Heart left ventricle (tissue), 16 donors: ENCODE measurements at regions of chr11 and their contacts with region 1.

Region 1: GRCh38 chr11:94417386-94417987 is 16.3 kb upstream of the GPR83 start:
- DNase-seq: no peak
- ATAC-seq: no peak
- H3K4me3 ChIP-seq: no peak overlapping the region
- H3K27ac ChIP-seq: no peak overlapping the region
- H3K4me1 ChIP-seq: peaks cover 0 to 3% (median 0%) of the 10 kb centered on the region in 12 donors
- H3K27me3 ChIP-seq: no peaks in the 10 kb centered on the region
- CTCF ChIP-seq: peak; percentile 31 to 70 (median 56)
- POLR2A ChIP-seq: no peak

Region 2: GRCh38 chr11:93921695-93922468 is 495.6 kb before region 1 on chr11:
- intact Hi-C with region 1: loop called in 6 of 10 experiments (anchors 5 to 10 kb)
- DNase-seq: peak in 1 of 5 donors; percentile 14
- ATAC-seq: peak in 2 of 4 donors; percentile 47 to 52
- H3K4me3 ChIP-seq: no peak overlapping the region
- H3K27ac ChIP-seq: no peak overlapping the region
- H3K4me1 ChIP-seq: no peaks in the 10 kb centered on the region
- H3K27me3 ChIP-seq: peaks cover 0 to 13% (median 0%) of the 10 kb centered on the region in 9 donors
- CTCF ChIP-seq: peak; percentile 32 to 65 (median 48)
- POLR2A ChIP-seq: no peak

Region 3: GRCh38 chr11:94171693-94172440 is 245.6 kb before region 1 on chr11:
- intact Hi-C with region 1: loop called in 1 of 10 experiments (anchors 10 kb)
- DNase-seq: no peak
- ATAC-seq: peak in 3 of 4 donors; percentile 33 to 50 (median 39)
- H3K4me3 ChIP-seq: no peak overlapping the region
- H3K27ac ChIP-seq: no peak overlapping the region
- H3K4me1 ChIP-seq: peaks cover 0 to 20% (median 3%) of the 10 kb centered on the region in 12 donors
- H3K27me3 ChIP-seq: no peaks in the 10 kb centered on the region
- CTCF ChIP-seq: peak; percentile 26 to 60 (median 44)
- POLR2A ChIP-seq: no peak

Region 4: DNA sequence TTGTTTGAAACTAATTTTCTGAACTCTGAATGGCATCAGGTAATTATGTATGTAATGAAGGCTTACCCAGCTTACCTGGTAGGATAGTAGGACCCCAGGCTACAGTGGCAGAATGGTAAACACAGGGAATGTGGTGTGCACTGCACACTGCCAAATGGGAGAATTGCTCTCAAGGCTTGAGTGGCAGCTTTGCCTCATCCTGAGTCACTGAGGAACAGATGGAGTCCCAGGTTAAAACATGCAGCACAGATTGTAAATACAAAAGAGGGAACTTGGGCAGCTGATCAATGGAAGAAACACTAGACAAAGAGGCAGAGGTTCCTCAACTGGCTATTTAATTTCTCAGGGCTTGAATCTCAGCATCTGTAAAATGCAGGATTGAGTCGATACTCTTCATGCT is 40.6 kb before region 1 on chr11:
- intact Hi-C with region 1: no loop called
- DNase-seq: no peak
- ATAC-seq: no peak
- H3K4me3 ChIP-seq: no peak overlapping the region
- H3K27ac ChIP-seq: no peak overlapping the region
- H3K4me1 ChIP-seq: no peaks in the 10 kb centered on the region
- H3K27me3 ChIP-seq: no peaks in the 10 kb centered on the region
- CTCF ChIP-seq: no peak
- POLR2A ChIP-seq: no peak

Region 5: DNA sequence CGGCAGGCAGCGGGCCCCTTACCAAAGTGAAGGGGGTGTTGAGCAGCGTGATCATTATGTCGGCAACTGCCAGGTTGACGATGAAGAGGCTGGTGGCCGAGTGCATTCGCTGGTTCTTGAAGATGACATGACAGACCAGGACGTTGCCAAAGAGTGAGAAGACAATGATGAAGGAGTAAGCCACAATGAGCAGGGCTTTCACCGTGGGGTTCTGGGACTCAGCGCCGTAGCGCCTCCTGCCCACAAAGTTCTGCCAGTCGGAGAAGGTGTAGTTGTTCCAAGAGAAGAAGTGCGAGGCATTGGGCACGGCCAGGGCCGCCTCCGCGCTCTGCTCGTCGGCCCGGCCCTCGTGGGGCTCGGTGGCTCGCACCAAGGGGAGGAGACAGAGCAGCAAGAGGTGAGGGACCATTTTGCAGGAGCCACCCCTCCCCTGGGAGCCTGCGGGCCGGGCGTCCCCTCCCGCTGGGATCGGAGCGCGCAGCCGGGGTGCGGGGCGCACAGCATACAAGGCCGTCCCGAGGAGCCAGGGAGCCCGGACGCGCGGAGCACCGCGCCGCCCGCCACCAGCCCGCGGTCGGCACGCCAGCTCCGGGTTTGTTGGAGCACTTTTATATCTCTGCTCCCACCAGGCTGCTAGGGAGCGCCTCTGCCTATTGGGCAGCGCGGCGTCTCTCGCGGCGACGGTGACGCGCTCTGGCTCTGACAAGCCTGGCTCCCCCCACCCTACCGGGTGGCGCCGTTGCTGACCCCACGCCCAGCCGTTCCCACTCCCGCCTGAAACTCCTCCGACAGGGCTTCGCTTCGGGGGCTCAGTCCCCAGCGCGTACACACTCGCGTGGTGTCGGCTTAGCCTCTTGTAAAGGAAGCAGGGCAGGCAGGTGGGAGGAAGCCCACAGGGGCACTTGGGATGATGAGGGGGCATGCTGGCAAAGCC is 16.4 kb before region 1 on chr11 and contains the start of gene GPR83:
- intact Hi-C with region 1: no loop called
- DNase-seq: peak in 1 of 5 donors; percentile 38
- ATAC-seq: peak in 3 of 4 donors; percentile 36 to 57 (median 50)
- H3K4me3 ChIP-seq: peak within 1 kb of the TSS; percentile 21 to 59 (median 48)
- H3K27ac ChIP-seq: peak within 1 kb of the TSS in 1 of 12 donors; percentile 9
- H3K4me1 ChIP-seq: peaks cover 0 to 14% (median 0%) of the 10 kb centered on the region in 12 donors
- H3K27me3 ChIP-seq: peaks cover 3 to 45% (median 18%) of the 10 kb centered on the region in 9 donors
- CTCF ChIP-seq: no peak
- POLR2A ChIP-seq: no peak
- total RNA-seq, gene GPR83: 0.05 to 0.44 (median 0.19) TPM in 7 of 9 donors, not detected in the others